Mammary epithelial cell (primary cell): ENCODE measurements at regions of chrX and their contacts with region 1.

Region 1: DNA sequence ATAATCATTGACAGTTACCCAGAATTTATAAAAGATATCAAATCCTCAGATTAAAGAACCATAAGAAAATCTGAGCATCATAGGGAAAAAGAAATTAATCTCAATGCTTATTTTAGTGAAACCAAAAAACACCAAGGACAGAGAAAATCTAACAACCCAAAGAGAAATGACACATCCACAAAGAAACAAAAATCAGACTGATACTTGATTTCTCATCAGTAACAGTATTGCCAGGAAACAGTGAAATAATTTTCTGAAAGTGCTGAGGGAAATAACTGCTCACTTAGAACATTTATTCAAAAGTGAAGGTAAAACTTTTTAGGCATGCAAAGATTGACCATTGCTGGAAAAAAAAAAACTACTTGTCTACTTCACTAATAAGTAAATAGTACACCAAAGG is 10.6 kb downstream of the MOSPD2 start:
- DNase-seq: no peak
- H3K4me3 ChIP-seq: no peak overlapping the region
- H3K27ac ChIP-seq: no peak overlapping the region
- H3K4me1 ChIP-seq: no peaks in the 10 kb centered on the region
- H3K27me3 ChIP-seq: no peaks in the 10 kb centered on the region
- CTCF ChIP-seq: no peak

Region 2: GRCh38 chrX:13791559-13791958 is 1092.3 kb before region 1 on chrX:
- CTCF ChIA-PET with region 1: no interaction called
- dilution Hi-C with region 1: no loop called
- in situ Hi-C with region 1: no loop called
- intact Hi-C with region 1: no loop called
- DNase-seq: peak; percentile 11
- H3K4me3 ChIP-seq: no peak overlapping the region
- H3K27ac ChIP-seq: peak overlapping the region; percentile 46
- H3K4me1 ChIP-seq: peaks cover 18% of the 10 kb centered on the region
- H3K27me3 ChIP-seq: no peaks in the 10 kb centered on the region
- CTCF ChIP-seq: no peak

Region 3: DNA sequence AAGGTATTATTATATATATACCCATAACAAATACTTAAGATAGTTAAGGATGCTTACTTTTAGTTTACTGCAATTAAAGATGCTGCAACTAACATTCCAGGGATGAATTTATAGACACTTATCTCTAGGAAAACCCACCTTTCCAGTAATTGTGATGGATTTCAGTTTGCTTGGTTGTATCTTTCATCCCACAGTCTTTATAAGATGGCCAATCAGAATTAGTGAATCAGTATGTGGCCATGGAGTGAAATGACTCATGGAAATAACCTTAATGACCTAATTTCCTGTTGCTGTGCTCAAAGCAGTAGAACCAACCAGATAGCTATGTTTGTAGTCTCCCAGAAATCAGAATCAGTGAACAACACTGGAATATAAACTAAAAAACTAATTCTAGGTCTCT is 15.8 kb after region 1 on chrX:
- CTCF ChIA-PET with region 1: no interaction called
- dilution Hi-C with region 1: no loop called
- in situ Hi-C with region 1: no loop called
- intact Hi-C with region 1: loop called (anchors 2 kb)
- DNase-seq: peak; percentile 67
- H3K4me3 ChIP-seq: no peak overlapping the region
- H3K27ac ChIP-seq: peak overlapping the region; percentile 62
- H3K4me1 ChIP-seq: peaks cover 8% of the 10 kb centered on the region
- H3K27me3 ChIP-seq: no peaks in the 10 kb centered on the region
- CTCF ChIP-seq: no peak

Region 4: DNA sequence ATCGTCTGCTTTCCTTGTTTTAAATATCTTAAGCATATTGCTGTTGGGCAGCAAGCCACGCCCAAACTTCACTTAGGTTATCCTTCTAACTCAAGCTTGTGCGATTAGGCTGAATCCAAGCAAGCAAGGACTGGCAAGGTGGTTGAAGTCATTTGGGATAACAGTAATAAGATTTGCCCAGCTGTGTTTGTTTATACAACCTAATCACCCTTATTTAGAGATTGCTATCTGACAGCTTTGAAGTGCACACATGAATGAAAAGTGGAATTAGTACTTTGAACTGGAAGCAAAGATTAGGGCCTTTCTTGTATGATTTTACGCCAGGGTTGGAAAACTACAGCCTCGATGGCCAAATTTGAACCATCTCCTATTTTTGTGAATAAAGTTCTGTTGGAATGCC is 203.9 kb after region 1 on chrX:
- CTCF ChIA-PET with region 1: no interaction called
- dilution Hi-C with region 1: no loop called
- in situ Hi-C with region 1: no loop called
- intact Hi-C with region 1: no loop called
- DNase-seq: no peak
- H3K4me3 ChIP-seq: no peak overlapping the region
- H3K27ac ChIP-seq: no peak overlapping the region
- H3K4me1 ChIP-seq: no peaks in the 10 kb centered on the region
- H3K27me3 ChIP-seq: no peaks in the 10 kb centered on the region
- CTCF ChIP-seq: no peak

Region 5: GRCh38 chrX:15631637-15632036 is 747.8 kb after region 1 on chrX:
- CTCF ChIA-PET with region 1: no interaction called
- dilution Hi-C with region 1: no loop called
- in situ Hi-C with region 1: no loop called
- intact Hi-C with region 1: no loop called
- DNase-seq: no peak
- H3K4me3 ChIP-seq: no peak overlapping the region
- H3K27ac ChIP-seq: no peak overlapping the region
- H3K4me1 ChIP-seq: no peaks in the 10 kb centered on the region
- H3K27me3 ChIP-seq: no peaks in the 10 kb centered on the region
- CTCF ChIP-seq: no peak